ENCODE measurements at regions of chr3 and their contacts with region 1.

Region 1: GRCh38 chr3:119098619-119099222 is 47.2 kb upstream of the TEX55 start:
- DNase-seq: no peak
- ATAC-seq: no peak
- H3K4me3 ChIP-seq: no peak overlapping the region
- H3K27ac ChIP-seq: no peak overlapping the region
- H3K4me1 ChIP-seq: no peaks in the 10 kb centered on the region
- H3K27me3 ChIP-seq: no peaks in the 10 kb centered on the region
- CTCF ChIP-seq: peak; percentile 66

Region 2: DNA sequence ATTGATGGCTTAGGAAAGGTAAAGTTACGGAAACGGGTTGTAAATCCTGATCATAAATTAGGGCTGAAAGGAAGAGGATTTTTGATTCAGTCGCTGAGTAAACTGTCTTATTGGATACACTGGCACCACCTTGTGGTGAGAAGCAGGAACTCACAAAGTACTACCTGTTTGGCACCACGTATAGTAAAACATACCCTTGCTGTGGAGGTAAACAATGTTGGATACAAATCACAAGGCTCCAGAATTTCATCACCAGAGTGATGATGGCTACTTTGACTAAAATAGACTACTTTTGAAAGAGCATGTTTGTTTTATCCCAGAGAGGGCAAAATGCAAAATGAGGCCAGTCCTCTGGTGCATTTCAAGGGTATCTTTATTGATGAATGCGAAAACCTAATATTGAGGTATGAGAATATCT is 281.0 kb before region 1 on chr3:
- intact Hi-C with region 1: no loop called
- DNase-seq: no peak
- ATAC-seq: peak; percentile 72 to 77
- H3K4me3 ChIP-seq: no peak overlapping the region
- H3K27ac ChIP-seq: no peak overlapping the region
- H3K4me1 ChIP-seq: no peaks in the 10 kb centered on the region
- H3K27me3 ChIP-seq: no peaks in the 10 kb centered on the region
- CTCF ChIP-seq: peak; percentile 78

Region 3: GRCh38 chr3:118884748-118885206 is 213.9 kb before region 1 on chr3:
- intact Hi-C with region 1: loop called (anchors 5 kb)
- DNase-seq: peak; percentile 71
- ATAC-seq: peak; percentile 83 to 88
- H3K4me3 ChIP-seq: no peak overlapping the region
- H3K27ac ChIP-seq: no peak overlapping the region
- H3K4me1 ChIP-seq: no peaks in the 10 kb centered on the region
- H3K27me3 ChIP-seq: peaks cover 15% of the 10 kb centered on the region
- CTCF ChIP-seq: peak; percentile 86

Region 4: DNA sequence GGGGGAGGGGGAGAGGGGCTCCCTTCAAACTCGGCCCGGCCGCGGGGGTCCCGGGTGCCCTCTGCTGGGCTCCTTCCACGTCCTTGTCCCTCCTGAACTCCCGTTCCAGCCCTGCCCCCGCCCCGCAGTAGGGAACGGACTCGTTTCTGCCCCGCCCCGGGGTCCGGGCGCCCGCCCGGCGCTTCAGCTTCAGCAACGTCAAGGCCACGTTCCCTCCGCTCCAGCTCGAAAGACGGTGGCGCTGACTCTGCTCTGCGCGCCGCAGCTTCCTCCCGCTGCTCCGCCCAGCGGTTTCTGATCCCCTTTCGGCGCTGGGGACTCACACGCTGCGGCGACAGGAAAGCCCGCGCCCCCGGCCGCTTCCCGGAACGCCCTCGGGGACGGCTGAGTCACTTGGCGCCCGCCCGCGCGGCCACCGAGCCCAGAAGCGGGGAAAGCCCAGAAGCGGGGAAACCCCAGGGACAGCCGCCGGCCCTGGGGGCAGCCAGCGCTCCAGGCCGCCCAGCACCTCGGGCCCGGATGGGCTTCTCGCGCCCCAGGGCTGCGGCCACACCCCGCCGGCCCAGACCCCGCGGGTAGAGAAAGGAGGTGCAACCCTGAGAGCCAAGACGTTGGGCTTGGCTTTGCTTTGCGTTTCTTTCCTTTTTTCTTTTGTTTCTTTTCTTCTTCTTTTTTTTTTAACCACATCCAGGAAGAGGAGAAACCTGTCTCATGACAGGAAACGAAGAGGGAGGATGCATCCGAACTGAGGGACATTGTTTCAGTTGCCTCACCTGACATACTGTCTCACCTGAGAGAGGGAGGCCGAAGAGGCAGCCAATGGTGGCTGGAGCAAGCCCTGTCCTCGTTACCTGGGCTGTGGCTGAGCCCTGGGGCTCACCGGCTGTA is 224.4 kb after region 1 on chr3:
- intact Hi-C with region 1: no loop called
- DNase-seq: peak; percentile 93
- ATAC-seq: peak; percentile 96 to 97
- H3K4me3 ChIP-seq: peak overlapping the region; percentile 68
- H3K27ac ChIP-seq: peak overlapping the region; percentile 93
- H3K4me1 ChIP-seq: peaks cover 63% of the 10 kb centered on the region
- H3K27me3 ChIP-seq: no peaks in the 10 kb centered on the region
- CTCF ChIP-seq: no peak